ENCODE measurements at regions of chr13 and their contacts with region 1.

Region 1: GRCh38 chr13:39976481-39976880 is 321.0 kb downstream of the COG6 start:
- DNase-seq: no peak
- ATAC-seq: no peak
- H3K4me3 ChIP-seq: no peak overlapping the region
- H3K4me3 Mint-ChIP-seq: no peak overlapping the region
- H3K27ac ChIP-seq: no peak overlapping the region
- H3K27ac Mint-ChIP-seq: no peak overlapping the region
- H3K4me1 ChIP-seq: no peaks in the 10 kb centered on the region
- H3K4me1 Mint-ChIP-seq: no peaks in the 10 kb centered on the region
- H3K27me3 ChIP-seq: no peaks in the 10 kb centered on the region
- H3K27me3 Mint-ChIP-seq: no peaks in the 10 kb centered on the region
- CTCF ChIP-seq: no peak

Region 2: DNA sequence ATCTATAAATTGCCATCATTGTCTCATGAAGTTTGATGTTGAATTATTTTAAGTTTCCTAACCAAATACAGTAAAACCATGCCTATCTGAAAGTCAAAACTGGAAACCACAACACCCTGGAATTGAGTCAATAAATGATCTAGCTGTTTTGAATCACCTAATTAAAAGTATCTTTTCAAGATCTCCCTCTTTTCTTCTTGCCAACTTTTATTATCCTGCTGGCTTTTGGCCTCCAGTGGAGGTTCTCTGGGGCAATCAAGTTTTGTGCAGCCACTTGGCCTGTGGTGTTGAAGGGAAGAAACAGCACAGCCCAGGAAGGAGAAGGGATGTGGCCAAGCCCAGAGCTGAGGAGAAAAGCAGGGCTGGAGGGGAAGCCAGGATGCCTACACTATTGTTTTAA is 65.6 kb before region 1 on chr13:
- CTCF ChIA-PET with region 1: no interaction called
- POLR2A ChIA-PET with region 1: no interaction called
- intact Hi-C with region 1: loop called in 1 of 2 experiments (anchors 2 kb)
- DNase-seq: no peak
- ATAC-seq: no peak
- H3K4me3 ChIP-seq: no peak overlapping the region
- H3K4me3 Mint-ChIP-seq: no peak overlapping the region
- H3K27ac ChIP-seq: no peak overlapping the region
- H3K27ac Mint-ChIP-seq: no peak overlapping the region
- H3K4me1 ChIP-seq: no peaks in the 10 kb centered on the region
- H3K4me1 Mint-ChIP-seq: peaks cover 5% of the 10 kb centered on the region
- H3K27me3 ChIP-seq: no peaks in the 10 kb centered on the region
- H3K27me3 Mint-ChIP-seq: peaks cover 2% of the 10 kb centered on the region
- CTCF ChIP-seq: no peak

Region 3: DNA sequence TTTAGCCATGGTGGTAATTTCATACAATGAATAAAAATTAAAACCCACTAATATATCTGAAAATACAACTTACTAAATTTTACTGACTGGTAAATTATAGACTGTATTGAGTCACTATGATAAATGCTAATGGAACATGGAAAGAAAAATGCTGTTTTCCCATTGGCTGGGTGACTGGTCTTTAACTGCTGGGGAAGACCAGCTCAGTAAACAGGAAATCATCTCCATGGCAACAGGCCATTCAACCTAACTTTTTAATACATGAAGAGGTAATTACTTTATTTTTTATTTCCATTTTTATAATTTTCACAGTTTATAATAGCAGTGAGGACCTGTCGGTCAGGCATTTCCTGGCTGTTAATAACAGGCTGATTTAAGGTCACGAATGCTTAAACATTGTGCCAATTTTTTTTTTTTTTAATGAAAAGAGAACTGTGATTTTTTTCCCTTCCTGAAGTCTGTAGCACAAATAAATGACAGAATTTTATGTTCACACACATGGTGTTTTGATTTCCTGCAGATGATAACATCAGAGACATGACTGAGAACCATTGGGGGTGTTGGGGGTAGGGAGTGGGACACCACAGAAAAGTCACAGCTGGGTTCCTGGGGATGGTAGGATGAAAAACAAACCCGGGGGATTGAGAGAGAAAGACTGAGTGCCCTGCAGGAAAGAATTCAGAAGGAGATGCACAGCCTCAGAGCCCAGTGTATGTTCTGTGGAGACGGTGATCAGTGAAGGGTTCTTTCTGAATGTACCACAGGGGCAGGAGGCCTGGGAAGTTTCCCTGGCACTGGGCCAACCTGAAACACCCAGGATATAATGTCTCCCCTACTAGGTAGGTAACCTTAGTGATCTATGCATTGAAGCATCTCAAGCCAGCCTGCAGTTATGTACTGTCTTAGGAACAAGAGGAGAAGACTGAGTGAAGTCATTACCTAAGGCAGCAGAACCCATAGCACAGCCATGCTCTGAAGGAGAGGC is 23.9 kb before region 1 on chr13:
- CTCF ChIA-PET with region 1: no interaction called
- POLR2A ChIA-PET with region 1: no interaction called
- intact Hi-C with region 1: no loop called
- DNase-seq: peak in 3 of 9 experiments; percentile 9 to 55 (median 26)
- ATAC-seq: no peak
- H3K4me3 ChIP-seq: no peak overlapping the region
- H3K4me3 Mint-ChIP-seq: no peak overlapping the region
- H3K27ac ChIP-seq: peak overlapping the region in 1 of 2 experiments; percentile 28
- H3K27ac Mint-ChIP-seq: peak overlapping the region; percentile 67
- H3K4me1 ChIP-seq: peaks cover 34% of the 10 kb centered on the region
- H3K4me1 Mint-ChIP-seq: peaks cover 49% of the 10 kb centered on the region
- H3K27me3 ChIP-seq: no peaks in the 10 kb centered on the region
- H3K27me3 Mint-ChIP-seq: no peaks in the 10 kb centered on the region
- CTCF ChIP-seq: no peak

Region 4: DNA sequence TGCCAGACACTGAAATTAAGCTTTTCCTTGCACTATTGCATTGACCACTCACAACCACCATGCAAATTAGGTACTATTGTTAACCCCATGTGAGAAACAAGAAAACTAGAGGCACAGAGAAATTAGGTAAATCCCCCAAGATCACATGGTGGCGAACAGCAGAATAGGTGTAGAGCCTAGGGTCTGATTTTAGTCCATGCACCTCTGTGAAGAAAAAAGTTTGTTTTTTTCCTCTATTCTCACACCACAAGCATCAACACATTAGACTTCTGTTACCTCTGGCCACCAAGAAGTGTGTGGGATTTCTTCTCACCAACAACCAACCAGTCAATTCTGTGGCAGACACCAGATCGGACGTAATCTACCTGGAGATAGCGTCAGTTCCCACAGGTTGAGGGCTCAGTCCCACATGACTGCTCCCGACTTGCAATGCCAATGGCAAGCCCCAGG is 70.9 kb after region 1 on chr13:
- CTCF ChIA-PET with region 1: no interaction called
- POLR2A ChIA-PET with region 1: no interaction called
- intact Hi-C with region 1: no loop called
- DNase-seq: no peak
- ATAC-seq: no peak
- H3K4me3 ChIP-seq: no peak overlapping the region
- H3K4me3 Mint-ChIP-seq: no peak overlapping the region
- H3K27ac ChIP-seq: no peak overlapping the region
- H3K27ac Mint-ChIP-seq: no peak overlapping the region
- H3K4me1 ChIP-seq: no peaks in the 10 kb centered on the region
- H3K4me1 Mint-ChIP-seq: peaks cover 1% of the 10 kb centered on the region
- H3K27me3 ChIP-seq: peaks cover 0 to 2% of the 10 kb centered on the region in 2 experiments
- H3K27me3 Mint-ChIP-seq: peaks cover 2% of the 10 kb centered on the region
- CTCF ChIP-seq: no peak

Region 5: GRCh38 chr13:40692946-40693345 is 716.5 kb after region 1 on chr13:
- CTCF ChIA-PET with region 1: no interaction called
- POLR2A ChIA-PET with region 1: no interaction called
- intact Hi-C with region 1: no loop called
- DNase-seq: no peak
- ATAC-seq: no peak
- H3K4me3 ChIP-seq: no peak overlapping the region
- H3K4me3 Mint-ChIP-seq: no peak overlapping the region
- H3K27ac ChIP-seq: no peak overlapping the region
- H3K27ac Mint-ChIP-seq: no peak overlapping the region
- H3K4me1 ChIP-seq: no peaks in the 10 kb centered on the region
- H3K4me1 Mint-ChIP-seq: no peaks in the 10 kb centered on the region
- H3K27me3 ChIP-seq: no peaks in the 10 kb centered on the region
- H3K27me3 Mint-ChIP-seq: no peaks in the 10 kb centered on the region
- CTCF ChIP-seq: no peak

Measured in CD8-positive, alpha-beta T cell (primary cell).